MCF 10A (cell line): ENCODE measurements at regions of chr13 and their contacts with region 1.

Region 1: GRCh38 chr13:106567474-106568298 is at the start of gene ARGLU1:
- DNase-seq: peak; percentile 92
- H3K4me3 Mint-ChIP-seq: peak within 1 kb of the TSS; percentile 81
- H3K27ac Mint-ChIP-seq: peak within 1 kb of the TSS; percentile 32
- H3K4me1 Mint-ChIP-seq: peaks cover 38% of the 10 kb centered on the region
- H3K27me3 Mint-ChIP-seq: no peaks in the 10 kb centered on the region
- CTCF ChIP-seq: no peak
- total RNA-seq, gene ARGLU1: 91.7 and 94.4 TPM in 2 replicates

Region 2: DNA sequence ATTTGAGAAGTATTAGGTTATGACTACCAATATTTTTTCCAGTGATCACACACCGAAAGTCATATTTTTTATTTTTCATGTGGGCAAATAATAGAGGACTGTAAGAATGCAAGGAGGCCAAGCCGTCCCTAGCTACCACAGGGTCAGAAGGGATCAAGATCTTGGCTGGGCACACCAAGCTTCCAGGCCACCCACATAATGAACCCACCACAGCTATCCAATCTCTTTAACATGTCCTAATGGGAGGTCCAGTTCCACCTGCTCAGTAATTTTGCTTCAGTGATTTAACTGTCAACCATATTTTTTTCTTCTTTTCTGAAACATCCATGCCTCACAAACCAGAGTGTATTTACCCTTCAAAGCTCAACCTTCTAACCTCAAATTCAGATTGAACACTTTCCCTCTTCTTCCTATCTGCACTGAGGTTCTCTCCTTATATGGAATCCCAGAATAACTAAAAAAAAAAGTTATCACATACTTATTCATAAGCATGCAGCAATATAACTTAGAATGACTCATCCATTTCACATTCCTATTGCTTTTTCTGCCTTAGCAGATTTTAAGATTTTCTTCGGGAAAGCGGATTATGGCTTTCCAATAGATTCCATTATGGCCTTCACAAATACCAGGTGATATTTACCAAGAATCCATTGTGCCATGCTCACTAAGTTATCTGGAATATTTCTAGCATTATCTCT is 11.9 kb before region 1 on chr13:
- CTCF ChIA-PET with region 1: interaction called, 3 read pairs
- POLR2A ChIA-PET with region 1: interaction called, 26 read pairs
- intact Hi-C with region 1: no loop called
- DNase-seq: no peak
- H3K4me3 Mint-ChIP-seq: no peak overlapping the region
- H3K27ac Mint-ChIP-seq: no peak overlapping the region
- H3K4me1 Mint-ChIP-seq: peaks cover 21% of the 10 kb centered on the region
- H3K27me3 Mint-ChIP-seq: no peaks in the 10 kb centered on the region
- CTCF ChIP-seq: no peak

Region 3: DNA sequence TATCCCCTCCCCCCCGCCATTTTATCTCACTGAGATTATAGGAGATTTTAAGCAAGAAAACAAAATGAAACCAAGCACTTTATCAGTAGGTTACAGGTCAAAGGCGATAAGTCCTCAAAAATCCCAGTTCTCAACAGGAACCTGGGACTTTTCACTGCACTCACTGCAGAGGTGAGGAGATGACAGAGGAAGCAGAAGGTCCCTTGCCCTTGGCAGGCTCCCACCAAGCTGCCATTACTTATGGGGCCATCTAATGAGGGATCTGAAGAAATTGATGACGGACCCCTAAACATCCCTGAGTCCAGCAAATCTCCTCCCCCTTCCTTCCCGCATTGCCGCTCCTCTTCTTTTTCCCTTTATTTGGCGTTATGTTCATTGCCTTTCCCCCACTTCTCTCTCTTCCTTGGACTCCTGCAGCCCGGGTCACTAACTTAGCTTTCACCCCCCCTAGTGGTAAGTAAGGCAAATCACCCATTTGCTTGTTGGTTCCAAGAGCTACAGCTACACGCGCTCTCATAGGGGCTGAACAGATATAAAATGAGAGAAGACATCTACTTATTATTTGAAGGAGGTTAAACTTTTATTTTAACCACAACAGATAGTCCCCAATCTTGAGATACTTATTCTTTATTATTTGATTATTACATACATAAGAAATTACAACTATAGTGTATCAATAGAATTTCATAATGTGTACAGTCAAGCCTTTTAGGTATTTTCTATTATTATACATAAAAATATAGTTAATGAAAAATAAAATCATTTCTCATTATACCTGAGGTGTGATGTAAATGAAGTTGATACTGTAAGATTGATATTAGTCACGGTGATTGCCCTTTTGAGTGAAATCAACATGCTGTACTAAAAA is 52.2 kb after region 1 on chr13:
- CTCF ChIA-PET with region 1: interaction called, 14 read pairs
- POLR2A ChIA-PET with region 1: interaction called, 20 read pairs
- intact Hi-C with region 1: loop called (anchors 2 kb)
- DNase-seq: peak; percentile 77
- H3K4me3 Mint-ChIP-seq: peak overlapping the region; percentile 8
- H3K27ac Mint-ChIP-seq: no peak overlapping the region
- H3K4me1 Mint-ChIP-seq: peaks cover 14% of the 10 kb centered on the region
- H3K27me3 Mint-ChIP-seq: peaks cover 31% of the 10 kb centered on the region
- CTCF ChIP-seq: peak; percentile 56

Region 4: GRCh38 chr13:106917673-106918556 is 350.2 kb after region 1 on chr13:
- CTCF ChIA-PET with region 1: interaction called, 3 read pairs
- POLR2A ChIA-PET with region 1: interaction called, 3 read pairs
- intact Hi-C with region 1: loop called (anchors 10 kb)
- DNase-seq: peak; percentile 75
- H3K4me3 Mint-ChIP-seq: peak overlapping the region; percentile 74
- H3K27ac Mint-ChIP-seq: peak overlapping the region; percentile 31
- H3K4me1 Mint-ChIP-seq: no peaks in the 10 kb centered on the region
- H3K27me3 Mint-ChIP-seq: no peaks in the 10 kb centered on the region
- CTCF ChIP-seq: peak; percentile 90

Region 5: GRCh38 chr13:107025978-107026377 is 458.3 kb after region 1 on chr13:
- CTCF ChIA-PET with region 1: no interaction called
- POLR2A ChIA-PET with region 1: no interaction called
- intact Hi-C with region 1: no loop called
- DNase-seq: peak; percentile 50
- H3K4me3 Mint-ChIP-seq: no peak overlapping the region
- H3K27ac Mint-ChIP-seq: no peak overlapping the region
- H3K4me1 Mint-ChIP-seq: peaks cover 5% of the 10 kb centered on the region
- H3K27me3 Mint-ChIP-seq: no peaks in the 10 kb centered on the region
- CTCF ChIP-seq: no peak

Region 6: DNA sequence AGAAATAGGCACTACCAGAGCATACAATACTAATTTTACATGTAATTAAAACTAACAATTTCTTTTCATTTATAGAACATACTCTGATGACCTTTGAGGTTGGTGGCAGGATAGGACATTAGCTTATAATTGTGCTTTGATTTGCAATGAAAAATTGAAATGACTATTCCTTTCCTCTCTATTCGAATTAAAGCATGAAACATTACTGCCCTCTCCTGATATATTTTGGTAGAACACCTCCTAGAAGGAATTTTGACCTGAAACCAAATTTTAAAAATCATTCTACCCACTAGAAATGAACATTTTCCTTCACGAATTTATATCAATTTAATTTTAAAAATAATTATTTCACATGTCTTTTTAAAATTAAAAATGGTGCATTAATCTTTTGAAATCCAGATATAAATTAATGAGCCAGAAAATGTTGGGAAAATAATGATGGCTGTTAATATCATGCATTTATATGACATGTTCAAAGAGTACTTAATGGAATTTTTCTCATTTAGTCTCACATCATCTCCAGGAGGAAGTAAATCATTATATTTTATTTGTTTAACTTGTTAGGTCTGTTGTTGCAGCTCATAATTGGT is 556.5 kb after region 1 on chr13:
- CTCF ChIA-PET with region 1: interaction called, 3 read pairs
- POLR2A ChIA-PET with region 1: interaction called, 3 read pairs
- intact Hi-C with region 1: loop called (anchors 5 kb)
- DNase-seq: peak; percentile 45
- H3K4me3 Mint-ChIP-seq: no peak overlapping the region
- H3K27ac Mint-ChIP-seq: no peak overlapping the region
- H3K4me1 Mint-ChIP-seq: peaks cover 6% of the 10 kb centered on the region
- H3K27me3 Mint-ChIP-seq: no peaks in the 10 kb centered on the region
- CTCF ChIP-seq: peak; percentile 58